Mammary epithelial cell (primary cell): ENCODE measurements at regions of chr3 and their contacts with region 1.

Region 1: DNA sequence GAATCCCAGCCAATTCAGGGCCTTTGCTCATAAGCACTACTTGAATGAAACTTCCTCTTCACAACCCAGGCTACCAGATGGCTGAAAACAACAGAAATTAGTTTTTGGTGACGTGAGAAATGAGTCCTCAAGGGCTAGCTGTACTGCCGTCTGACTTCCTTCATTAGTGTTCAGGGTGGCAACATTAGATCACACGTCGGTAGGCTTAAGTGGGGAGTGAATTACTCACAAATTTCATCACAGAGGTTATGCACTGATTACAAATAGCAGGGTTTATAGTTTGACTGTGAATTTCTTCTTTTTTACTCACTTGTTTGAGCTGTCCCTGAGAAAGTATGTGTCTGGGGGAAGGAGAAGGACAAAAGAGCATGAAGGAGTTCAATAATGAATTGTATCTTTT is 397.2 kb downstream of the GAP43 start:
- DNase-seq: peak; percentile 14
- H3K4me3 ChIP-seq: no peak overlapping the region
- H3K27ac ChIP-seq: no peak overlapping the region
- H3K4me1 ChIP-seq: no peaks in the 10 kb centered on the region
- H3K27me3 ChIP-seq: no peaks in the 10 kb centered on the region
- CTCF ChIP-seq: no peak

Region 2: GRCh38 chr3:116005404-116005803 is 15.1 kb before region 1 on chr3:
- CTCF ChIA-PET with region 1: interaction called, 15 read pairs
- dilution Hi-C with region 1: no loop called
- in situ Hi-C with region 1: no loop called
- intact Hi-C with region 1: no loop called
- DNase-seq: peak; percentile 95
- H3K4me3 ChIP-seq: no peak overlapping the region
- H3K27ac ChIP-seq: peak overlapping the region; percentile 91
- H3K4me1 ChIP-seq: peaks cover 36% of the 10 kb centered on the region
- H3K27me3 ChIP-seq: no peaks in the 10 kb centered on the region
- CTCF ChIP-seq: no peak